ENCODE measurements at regions of chr2 and their contacts with region 1.

Region 1: GRCh38 chr2:218312267-218312756 is 20.0 kb upstream of the TMBIM1 start:
- DNase-seq: no peak
- ATAC-seq: no peak
- H3K4me3 ChIP-seq: no peak overlapping the region
- H3K4me3 Mint-ChIP-seq: no peak overlapping the region
- H3K27ac ChIP-seq: no peak overlapping the region
- H3K27ac Mint-ChIP-seq: peak overlapping the region in 8 of 9 donors; percentile 36 to 88 (median 67)
- H3K4me1 ChIP-seq: peaks cover 15 to 17% of the 10 kb centered on the region in 2 donors
- H3K4me1 Mint-ChIP-seq: peaks cover 17 to 44% (median 40%) of the 10 kb centered on the region in 7 donors
- H3K27me3 ChIP-seq: no peaks in the 10 kb centered on the region
- H3K27me3 Mint-ChIP-seq: peaks cover 0 to 2% (median 0%) of the 10 kb centered on the region in 5 donors

Region 2: DNA sequence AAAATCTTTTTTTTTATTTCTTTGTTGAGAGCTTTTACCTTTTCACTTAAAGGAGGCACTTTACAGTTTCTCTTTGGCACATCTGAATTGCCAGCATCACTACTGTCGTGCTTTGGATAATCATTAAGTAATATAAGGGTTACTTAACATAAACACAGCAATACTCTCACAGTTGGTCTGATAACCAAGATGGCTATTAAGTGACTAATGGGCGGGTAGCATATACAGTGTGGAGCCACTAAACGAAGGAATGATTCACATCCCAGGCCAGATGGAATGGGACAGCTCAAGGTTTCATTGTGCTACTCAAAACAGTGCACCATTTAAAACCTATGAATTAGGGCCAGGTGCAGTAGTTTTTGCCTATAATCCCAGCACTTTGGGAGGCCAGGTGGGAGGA is 227.7 kb after region 1 on chr2:
- CTCF ChIA-PET with region 1: no interaction called
- POLR2A ChIA-PET with region 1: no interaction called
- intact Hi-C with region 1: no loop called
- DNase-seq: no peak
- ATAC-seq: no peak
- H3K4me3 ChIP-seq: no peak overlapping the region
- H3K4me3 Mint-ChIP-seq: no peak overlapping the region
- H3K27ac ChIP-seq: no peak overlapping the region
- H3K27ac Mint-ChIP-seq: no peak overlapping the region
- H3K4me1 ChIP-seq: no peaks in the 10 kb centered on the region
- H3K4me1 Mint-ChIP-seq: peaks cover 0 to 16% (median 5%) of the 10 kb centered on the region in 7 donors
- H3K27me3 ChIP-seq: no peaks in the 10 kb centered on the region
- H3K27me3 Mint-ChIP-seq: no peaks in the 10 kb centered on the region

Region 3: GRCh38 chr2:218648088-218648786 is 335.9 kb after region 1 on chr2:
- CTCF ChIA-PET with region 1: interaction called, 10 read pairs
- POLR2A ChIA-PET with region 1: no interaction called
- intact Hi-C with region 1: no loop called
- DNase-seq: peak; percentile 15 to 55 (median 46)
- ATAC-seq: peak; percentile 91
- H3K4me3 ChIP-seq: no peak overlapping the region
- H3K4me3 Mint-ChIP-seq: peak overlapping the region in 1 of 10 donors; percentile 7
- H3K27ac ChIP-seq: no peak overlapping the region
- H3K27ac Mint-ChIP-seq: peak overlapping the region in 1 of 9 donors; percentile 35
- H3K4me1 ChIP-seq: peaks cover 0 to 7% of the 10 kb centered on the region in 2 donors
- H3K4me1 Mint-ChIP-seq: peaks cover 0 to 14% (median 12%) of the 10 kb centered on the region in 7 donors
- H3K27me3 ChIP-seq: no peaks in the 10 kb centered on the region
- H3K27me3 Mint-ChIP-seq: no peaks in the 10 kb centered on the region

Measured in naive thymus-derived CD4-positive, alpha-beta T cell (primary cell).